Adrenal gland (tissue), 19 donors: ENCODE measurements at regions of chr11 and their contacts with region 1.

Region 1: DNA sequence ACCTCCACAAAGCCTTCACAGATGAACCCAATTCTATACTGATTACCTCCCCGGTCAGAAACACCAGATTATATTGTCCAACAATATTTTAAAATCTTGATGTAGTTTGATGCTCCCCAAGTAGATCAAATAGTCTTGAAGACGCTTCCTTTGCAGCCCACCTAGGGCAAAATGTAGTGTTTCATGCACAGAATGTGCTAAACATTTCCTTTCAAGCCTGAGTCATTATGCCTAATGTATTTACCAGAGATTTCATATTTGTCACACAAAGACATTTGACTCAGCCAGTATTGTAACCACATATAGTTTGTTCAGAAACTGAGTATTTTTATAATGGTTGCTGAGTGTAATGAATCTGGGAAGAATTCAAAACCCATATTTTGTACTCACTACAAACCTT is 1396.8 kb downstream of the LRRC4C start:
- DNase-seq: no peak
- H3K4me3 ChIP-seq: no peak overlapping the region
- H3K27ac ChIP-seq: no peak overlapping the region
- H3K4me1 ChIP-seq: no peaks in the 10 kb centered on the region
- H3K27me3 ChIP-seq: no peaks in the 10 kb centered on the region
- CTCF ChIP-seq: no peak
- POLR2A ChIP-seq: no peak

Region 2: GRCh38 chr11:39932966-39933365 is 129.7 kb before region 1 on chr11:
- intact Hi-C with region 1: no loop called
- DNase-seq: no peak
- H3K4me3 ChIP-seq: no peak overlapping the region
- H3K27ac ChIP-seq: no peak overlapping the region
- H3K4me1 ChIP-seq: no peaks in the 10 kb centered on the region
- H3K27me3 ChIP-seq: no peaks in the 10 kb centered on the region
- CTCF ChIP-seq: no peak
- POLR2A ChIP-seq: no peak

Region 3: GRCh38 chr11:40010011-40010410 is 52.6 kb before region 1 on chr11:
- intact Hi-C with region 1: loop called in 1 of 2 experiments (anchors 10 kb)
- DNase-seq: no peak
- H3K4me3 ChIP-seq: no peak overlapping the region
- H3K27ac ChIP-seq: no peak overlapping the region
- H3K4me1 ChIP-seq: no peaks in the 10 kb centered on the region
- H3K27me3 ChIP-seq: no peaks in the 10 kb centered on the region
- CTCF ChIP-seq: no peak
- POLR2A ChIP-seq: no peak